Natural killer cell (primary cell): ENCODE measurements at regions of chr6 and their contacts with region 1.

Region 1: DNA sequence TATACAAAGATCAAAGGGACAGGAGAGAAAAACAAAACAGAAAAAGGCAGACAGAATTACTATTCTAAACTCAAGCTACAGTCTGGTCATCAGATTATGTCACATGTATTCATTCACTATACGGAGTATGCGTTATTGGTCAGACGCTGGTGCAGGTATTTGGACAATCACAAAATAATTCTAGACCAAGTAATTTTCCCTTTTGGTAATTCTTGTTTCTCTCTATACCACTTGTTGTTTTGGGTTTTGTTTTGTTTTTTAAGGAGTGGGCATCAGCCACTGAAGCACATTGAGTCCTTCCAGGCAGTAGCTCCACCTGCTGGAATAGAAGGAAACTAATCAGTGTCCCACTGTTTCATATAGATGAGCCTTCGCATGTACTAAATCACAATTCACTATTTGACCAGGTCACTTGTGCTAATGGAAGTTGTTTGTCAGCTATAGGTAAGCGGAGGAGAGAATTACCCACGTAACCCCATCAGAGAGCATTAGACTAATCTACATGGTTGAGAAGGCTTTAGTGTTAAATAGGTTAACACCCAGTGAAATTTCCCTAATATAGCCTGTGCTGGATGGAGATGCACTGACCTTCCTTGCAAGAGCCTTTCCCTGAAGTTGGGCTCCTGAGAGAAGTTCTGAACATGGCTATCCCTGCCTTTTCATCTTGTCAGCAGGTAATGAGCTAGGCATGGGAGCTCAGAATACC is 77.9 kb downstream of the TNFAIP3 start:
- DNase-seq: peak in 1 of 2 donors; percentile 69
- ATAC-seq: peak; percentile 79 to 88 (median 86)
- H3K4me3 ChIP-seq: no peak overlapping the region
- H3K4me3 Mint-ChIP-seq: no peak overlapping the region
- H3K27ac ChIP-seq: no peak overlapping the region
- H3K27ac Mint-ChIP-seq: peak overlapping the region in 1 of 2 donors; percentile 30
- H3K4me1 ChIP-seq: peaks cover 2% of the 10 kb centered on the region
- H3K4me1 Mint-ChIP-seq: peaks cover 24 to 27% of the 10 kb centered on the region in 2 donors
- H3K27me3 ChIP-seq: no peaks in the 10 kb centered on the region
- H3K27me3 Mint-ChIP-seq: no peaks in the 10 kb centered on the region
- CTCF ChIP-seq: peak; percentile 79

Region 2: GRCh38 chr6:137799950-137800568 is 144.9 kb before region 1 on chr6:
- intact Hi-C with region 1: loop called (anchors 2 kb)
- DNase-seq: peak in 1 of 2 donors; percentile 93
- ATAC-seq: peak; percentile 83 to 90 (median 89)
- H3K4me3 ChIP-seq: no peak overlapping the region
- H3K4me3 Mint-ChIP-seq: no peak overlapping the region
- H3K27ac ChIP-seq: no peak overlapping the region
- H3K27ac Mint-ChIP-seq: peak overlapping the region; percentile 65 to 67
- H3K4me1 ChIP-seq: peaks cover 20% of the 10 kb centered on the region
- H3K4me1 Mint-ChIP-seq: peaks cover 36 to 38% of the 10 kb centered on the region in 2 donors
- H3K27me3 ChIP-seq: no peaks in the 10 kb centered on the region
- H3K27me3 Mint-ChIP-seq: no peaks in the 10 kb centered on the region
- CTCF ChIP-seq: peak; percentile 76